ENCODE measurements at regions of chr6 and their contacts with region 1.

Region 1: GRCh38 chr6:130885392-130886192 is 58.4 kb downstream of the SMLR1 start:
- DNase-seq: peak; percentile 86
- H3K4me3 Mint-ChIP-seq: no peak overlapping the region
- H3K27ac Mint-ChIP-seq: no peak overlapping the region
- H3K4me1 Mint-ChIP-seq: no peaks in the 10 kb centered on the region
- H3K27me3 Mint-ChIP-seq: no peaks in the 10 kb centered on the region

Region 2: DNA sequence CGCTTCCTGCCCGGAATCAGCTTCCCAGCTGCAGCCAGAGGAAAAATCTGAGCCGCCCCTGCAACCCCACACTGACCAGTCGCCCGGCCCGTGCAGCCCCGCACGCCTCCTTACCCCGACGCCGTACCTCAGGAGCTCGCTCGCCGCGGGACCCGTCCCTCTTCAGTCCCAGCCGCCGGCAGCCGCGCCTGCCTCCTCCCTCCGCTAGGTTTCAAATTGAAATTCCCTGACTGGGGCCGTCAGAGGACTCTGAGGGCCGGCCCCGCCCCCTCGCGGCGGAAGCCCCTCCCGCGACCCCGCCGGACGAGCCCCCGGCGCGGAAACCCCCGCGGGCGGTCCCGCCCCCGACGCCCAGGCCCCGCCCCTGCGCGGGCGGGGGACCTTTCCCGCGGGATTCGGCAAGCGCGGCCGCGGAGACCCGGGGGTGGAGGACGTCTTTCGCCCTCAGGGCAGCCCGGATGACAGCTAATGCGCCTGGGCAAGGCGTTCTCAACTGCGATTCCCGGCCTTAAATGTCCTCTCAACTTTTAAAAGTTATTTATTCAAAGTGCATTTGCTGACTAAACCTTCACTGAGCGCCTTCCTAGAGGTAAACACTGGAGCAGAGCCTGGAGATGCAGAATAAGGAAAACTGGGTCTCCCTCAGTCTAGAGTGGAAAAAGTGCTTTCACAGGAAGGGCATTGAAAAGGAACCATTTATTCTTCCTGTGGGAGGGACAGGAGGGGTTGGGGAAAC is 177.6 kb after region 1 on chr6 and contains the start of gene EPB41L2:
- CTCF ChIA-PET with region 1: no interaction called
- intact Hi-C with region 1: loop called (anchors 2 kb)
- DNase-seq: peak; percentile 80
- H3K4me3 Mint-ChIP-seq: peak within 1 kb of the TSS; percentile 80
- H3K27ac Mint-ChIP-seq: no peak within 1 kb of the TSS
- H3K4me1 Mint-ChIP-seq: peaks cover 22% of the 10 kb centered on the region
- H3K27me3 Mint-ChIP-seq: peaks cover 2% of the 10 kb centered on the region
- total RNA-seq, gene EPB41L2: 33.5 to 37.7 TPM

Region 3: DNA sequence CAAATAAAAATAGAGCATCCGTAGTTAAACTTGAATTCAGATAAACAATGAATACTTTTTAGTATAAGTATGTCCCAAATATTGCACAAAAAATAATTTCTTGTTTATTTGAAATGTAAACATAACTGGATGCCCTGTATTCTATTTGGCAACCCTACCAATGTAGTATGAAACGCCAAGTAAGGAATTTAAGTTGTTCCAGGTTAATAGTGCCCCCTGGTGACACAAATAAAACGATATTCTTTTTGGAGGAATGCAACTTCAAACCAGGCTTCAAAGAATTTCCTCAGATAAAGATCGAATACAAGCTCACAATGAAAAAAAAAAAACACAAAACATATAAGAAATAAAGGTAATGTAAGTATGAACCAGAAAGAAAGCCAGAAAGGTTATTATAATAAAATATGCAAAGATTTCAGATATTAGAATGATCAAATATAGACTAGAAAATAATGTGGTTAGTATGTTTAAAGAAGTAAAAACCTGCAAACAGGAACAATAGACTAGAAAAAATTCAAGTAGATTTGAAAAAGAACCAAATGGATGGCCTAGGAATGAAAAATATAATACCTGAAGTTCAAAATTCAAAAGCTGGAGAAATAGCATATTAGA is 231.3 kb after region 1 on chr6:
- CTCF ChIA-PET with region 1: interaction called, 104 read pairs
- intact Hi-C with region 1: loop called (anchors 1 kb)
- DNase-seq: no peak
- H3K4me3 Mint-ChIP-seq: no peak overlapping the region
- H3K27ac Mint-ChIP-seq: no peak overlapping the region
- H3K4me1 Mint-ChIP-seq: no peaks in the 10 kb centered on the region
- H3K27me3 Mint-ChIP-seq: no peaks in the 10 kb centered on the region

Region 4: DNA sequence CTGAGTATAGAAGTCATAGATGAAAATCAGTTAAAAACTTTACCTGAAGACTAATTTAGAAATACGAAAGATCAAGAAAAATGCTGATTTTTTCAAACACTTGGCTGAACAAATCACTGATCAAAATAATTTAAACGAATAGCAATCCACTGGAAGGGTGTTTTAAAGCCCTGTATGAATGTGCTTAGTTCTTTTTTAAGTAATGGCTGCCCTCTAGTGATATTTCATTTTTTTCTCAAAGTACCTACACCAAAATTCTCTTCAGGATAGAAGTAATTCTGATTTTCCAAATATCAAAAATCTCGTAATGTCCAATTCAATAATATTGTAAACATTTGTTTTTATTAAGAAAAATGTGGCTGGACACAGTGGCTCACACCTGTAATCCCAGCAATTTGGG is 282.2 kb after region 1 on chr6:
- CTCF ChIA-PET with region 1: interaction called, 5 read pairs
- intact Hi-C with region 1: loop called (anchors 1 kb)
- DNase-seq: no peak
- H3K4me3 Mint-ChIP-seq: no peak overlapping the region
- H3K27ac Mint-ChIP-seq: no peak overlapping the region
- H3K4me1 Mint-ChIP-seq: no peaks in the 10 kb centered on the region
- H3K27me3 Mint-ChIP-seq: no peaks in the 10 kb centered on the region

Region 5: DNA sequence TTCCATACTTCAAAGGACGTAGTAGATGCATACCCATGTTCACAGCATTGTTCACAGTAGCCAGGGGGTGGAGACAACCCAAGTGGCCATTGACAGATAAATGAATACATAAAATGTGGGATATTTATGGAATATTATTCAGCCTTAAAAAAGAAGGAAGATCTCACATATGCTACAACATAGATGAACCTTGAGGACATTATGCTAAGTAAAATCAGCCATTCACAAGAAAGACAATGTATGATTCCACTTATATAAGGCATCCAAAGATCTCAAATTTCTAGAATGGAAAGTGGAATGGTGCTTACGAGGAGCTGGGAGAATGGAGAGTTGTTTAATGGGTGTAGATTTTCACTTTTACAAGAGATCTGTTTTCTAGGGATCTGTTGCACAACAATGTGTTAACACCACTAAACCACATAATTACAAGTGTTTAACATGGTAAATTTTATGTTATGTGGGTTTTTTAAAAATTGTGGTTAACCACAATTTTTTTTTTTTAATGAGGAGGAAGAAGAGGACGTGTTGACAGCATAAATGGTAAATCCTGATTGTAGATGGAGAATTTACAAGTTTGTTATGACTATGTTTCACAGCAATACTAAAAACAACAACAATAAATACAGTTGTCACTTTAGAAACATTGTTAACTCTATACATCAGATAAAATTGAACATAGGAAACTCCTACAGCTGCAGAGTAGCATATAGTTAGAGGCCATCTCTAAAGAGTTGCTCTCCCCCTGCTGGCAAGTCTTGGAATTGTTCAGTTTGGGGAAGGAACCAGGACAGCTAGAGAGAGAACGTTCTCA is 1024.0 kb after region 1 on chr6:
- CTCF ChIA-PET with region 1: no interaction called
- intact Hi-C with region 1: loop called (anchors 10 kb)
- DNase-seq: peak; percentile 87
- H3K4me3 Mint-ChIP-seq: no peak overlapping the region
- H3K27ac Mint-ChIP-seq: no peak overlapping the region
- H3K4me1 Mint-ChIP-seq: peaks cover 5% of the 10 kb centered on the region
- H3K27me3 Mint-ChIP-seq: peaks cover 11% of the 10 kb centered on the region

Measured in activated naive CD4-positive, alpha-beta T cell treated with anti-CD3 and anti-CD28 coated beads for 36 hours (primary cell).